Lower leg skin (tissue), 4 donors: ENCODE measurements at regions of chr11 and their contacts with region 1.

Region 1: GRCh38 chr11:35030716-35031213 is 108.2 kb upstream of the CD44 start:
- DNase-seq: peak; percentile 89 to 95
- H3K4me3 ChIP-seq: no peak overlapping the region
- CTCF ChIP-seq: no peak
- POLR2A ChIP-seq: no peak

Region 2: GRCh38 chr11:35126000-35126878 is 95.5 kb after region 1 on chr11:
- intact Hi-C with region 1: loop called (anchors 10 kb)
- DNase-seq: no peak
- H3K4me3 ChIP-seq: no peak overlapping the region
- CTCF ChIP-seq: no peak
- POLR2A ChIP-seq: no peak

Region 3: GRCh38 chr11:35214792-35215193 is 184.0 kb after region 1 on chr11:
- intact Hi-C with region 1: no loop called
- DNase-seq: no peak
- H3K4me3 ChIP-seq: no peak overlapping the region
- CTCF ChIP-seq: no peak
- POLR2A ChIP-seq: no peak

Region 4: DNA sequence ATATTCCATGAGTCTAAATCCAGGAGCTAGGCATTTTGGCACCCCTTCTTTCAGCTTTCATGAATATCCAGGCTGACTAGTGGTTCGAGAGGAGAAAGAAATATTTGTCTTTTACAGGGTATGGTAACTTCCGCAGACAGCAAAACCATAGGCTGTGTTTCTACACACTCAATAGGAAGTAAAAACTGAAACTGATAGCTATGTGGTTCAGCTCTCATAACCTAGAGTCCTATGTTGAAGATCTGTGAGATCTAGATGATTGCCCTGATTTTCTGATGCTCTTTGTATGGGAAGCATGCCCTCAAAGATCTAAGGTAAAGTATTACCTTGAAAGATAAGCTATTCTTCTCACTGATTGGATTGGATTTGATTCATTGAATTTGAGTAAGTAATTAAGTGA is 226.5 kb after region 1 on chr11:
- intact Hi-C with region 1: no loop called
- DNase-seq: no peak
- H3K4me3 ChIP-seq: no peak overlapping the region
- CTCF ChIP-seq: no peak
- POLR2A ChIP-seq: no peak

Region 5: GRCh38 chr11:35343033-35343598 is 312.4 kb after region 1 on chr11:
- intact Hi-C with region 1: no loop called
- DNase-seq: no peak
- H3K4me3 ChIP-seq: no peak overlapping the region
- CTCF ChIP-seq: no peak
- POLR2A ChIP-seq: no peak